ENCODE measurements at regions of chr1 and their contacts with region 1.

Region 1: DNA sequence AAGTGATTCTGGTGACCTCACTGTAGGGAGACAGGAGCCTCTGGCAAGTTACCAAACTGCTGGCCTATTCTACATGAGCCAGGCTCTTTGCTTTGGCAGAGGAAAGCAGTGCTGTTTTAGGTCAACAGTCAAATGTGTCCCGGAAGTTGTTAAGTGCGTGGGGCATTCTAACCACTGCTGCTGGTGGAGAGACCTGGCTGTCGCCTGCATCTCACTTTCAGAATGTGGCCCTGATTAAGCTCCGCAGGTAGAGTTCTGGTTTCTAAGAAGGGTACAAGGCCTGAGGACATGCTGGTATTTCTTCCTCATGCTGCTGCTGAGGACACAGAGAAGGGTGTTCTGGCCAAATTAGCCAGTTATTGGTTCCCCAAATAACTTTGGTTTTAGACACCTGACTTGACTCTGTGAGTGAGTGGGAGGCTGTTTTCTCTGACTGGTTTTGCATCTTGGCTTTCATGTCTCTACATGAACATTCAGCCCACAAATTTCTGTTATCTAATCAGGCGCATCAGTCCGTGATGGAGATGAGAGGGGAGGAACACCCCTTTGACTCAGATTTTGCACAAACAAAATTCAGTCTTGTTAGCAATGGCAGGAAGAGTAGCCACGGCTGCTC is 120.8 kb downstream of the LMO4 start:
- DNase-seq: peak; percentile 98
- ATAC-seq: peak; percentile 91
- H3K4me3 ChIP-seq: 0 out of 2 replicates have a peak overlapping the region, but pooled peaks have one; percentile 4
- H3K27ac ChIP-seq: peak overlapping the region; percentile 48
- H3K4me1 ChIP-seq: peaks cover 19% of the 10 kb centered on the region
- H3K27me3 ChIP-seq: no peaks in the 10 kb centered on the region
- CTCF ChIP-seq: no peak
- EP300 ChIP-seq: peak; percentile 85 to 90
- POLR2A ChIP-seq: peak; percentile 65
- RAD21 ChIP-seq: no peak; the same call in 1 of the 2 replicates

Region 2: DNA sequence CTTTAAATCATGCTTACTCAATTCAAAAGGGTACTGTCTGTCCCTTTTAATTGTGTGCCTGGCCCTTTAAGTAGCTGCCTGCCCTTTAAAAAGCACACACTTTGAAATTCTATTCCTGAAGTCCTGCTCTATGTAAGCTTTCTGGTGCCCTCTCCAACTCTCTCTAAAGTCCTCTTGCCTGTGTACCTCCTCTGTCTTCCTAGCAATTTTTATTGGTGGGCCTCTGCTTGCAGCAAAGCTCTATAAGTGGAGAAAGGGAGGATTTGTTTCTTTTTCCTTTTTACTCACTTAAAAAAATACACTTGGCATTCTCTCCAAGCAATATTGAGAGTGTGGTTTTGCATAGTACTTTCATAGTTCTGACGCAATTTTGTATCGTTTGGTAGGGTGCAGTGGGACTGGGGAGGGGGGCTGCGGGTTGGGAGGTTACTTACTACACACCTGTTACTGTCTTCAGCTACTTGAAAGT is 14.6 kb after region 1 on chr1:
- CTCF ChIA-PET with region 1: interaction called, 4 read pairs
- POLR2A ChIA-PET with region 1: interaction called, 3 read pairs
- RAD21 ChIA-PET with region 1: interaction called, 6 read pairs
- SMC1A ChIA-PET with region 1: interaction called, 17 read pairs
- in situ Hi-C with region 1: no loop called
- intact Hi-C with region 1: loop called (anchors 1 kb)
- DNase-seq: peak; percentile 37
- ATAC-seq: peak; percentile 89
- H3K4me3 ChIP-seq: no peak overlapping the region
- H3K27ac ChIP-seq: no peak overlapping the region
- H3K4me1 ChIP-seq: peaks cover 5% of the 10 kb centered on the region; the same call in 1 of the 2 replicates
- H3K27me3 ChIP-seq: no peaks in the 10 kb centered on the region
- CTCF ChIP-seq: no peak
- EP300 ChIP-seq: peak in 1 of 2 experiments; percentile 62; a peak in 3 of 4 replicates
- POLR2A ChIP-seq: no peak
- RAD21 ChIP-seq: no peak

Region 3: GRCh38 chr1:87588495-87588894 is 139.0 kb after region 1 on chr1:
- CTCF ChIA-PET with region 1: no interaction called
- POLR2A ChIA-PET with region 1: no interaction called
- RAD21 ChIA-PET with region 1: no interaction called
- SMC1A ChIA-PET with region 1: no interaction called
- in situ Hi-C with region 1: no loop called
- intact Hi-C with region 1: loop called (anchors 5 kb)
- DNase-seq: peak; percentile 33
- ATAC-seq: peak; percentile 94
- H3K4me3 ChIP-seq: no peak overlapping the region
- H3K27ac ChIP-seq: no peak overlapping the region
- H3K4me1 ChIP-seq: peaks cover 33% of the 10 kb centered on the region
- H3K27me3 ChIP-seq: no peaks in the 10 kb centered on the region
- CTCF ChIP-seq: no peak
- EP300 ChIP-seq: no peak
- POLR2A ChIP-seq: no peak
- RAD21 ChIP-seq: no peak